Endothelial cell of umbilical vein (primary cell): ENCODE measurements at regions of chr17 and their contacts with region 1.

Region 1: DNA sequence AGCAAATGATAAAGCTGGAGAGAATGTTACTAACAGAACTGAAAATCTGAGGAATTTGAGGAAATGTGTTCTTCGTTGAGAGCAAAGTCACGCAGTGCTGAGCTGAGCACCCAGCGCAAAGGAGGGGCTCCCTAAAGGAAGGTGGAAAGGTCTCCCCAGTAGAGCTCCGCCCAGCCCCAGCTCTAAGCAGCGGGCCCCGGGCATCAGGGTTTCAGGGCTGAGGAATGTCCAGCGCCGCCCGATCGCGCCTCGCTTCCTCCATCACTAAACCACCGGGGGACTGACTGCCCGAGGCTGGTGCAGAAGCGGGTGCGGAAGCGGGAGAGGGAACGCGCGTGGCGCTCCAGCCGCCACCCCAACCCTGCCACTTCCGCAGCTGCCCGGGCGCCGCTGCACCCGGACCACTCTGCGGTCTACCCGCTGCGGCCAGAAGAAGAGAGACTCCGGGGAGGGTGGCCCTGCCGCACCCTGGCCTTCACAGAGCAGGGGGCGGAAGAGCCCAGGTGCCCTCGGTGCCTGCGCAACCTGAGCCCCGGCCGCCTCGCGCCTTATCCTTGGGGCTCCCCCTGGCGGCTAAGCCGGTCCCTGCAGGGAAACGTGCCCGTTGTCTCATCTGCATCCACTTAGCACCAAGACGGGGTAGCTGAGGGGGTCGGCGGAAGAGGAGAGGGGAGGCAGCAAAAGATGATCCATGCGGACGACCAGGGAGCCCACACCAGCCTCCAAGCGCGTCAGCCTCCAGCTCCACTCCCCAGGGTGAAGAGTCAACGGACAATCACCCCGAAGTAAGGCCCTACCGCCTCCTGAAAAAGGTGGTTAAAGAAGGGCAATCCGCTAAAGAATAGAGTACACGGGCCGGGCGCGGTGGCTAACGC is 12.4 kb upstream of the GUCY2D start:
- DNase-seq: peak; percentile 66
- H3K4me3 ChIP-seq: peak overlapping the region; percentile 45 to 53 (median 51)
- H3K27ac ChIP-seq: no peak overlapping the region
- H3K4me1 ChIP-seq: peaks cover 4% of the 10 kb centered on the region
- H3K27me3 ChIP-seq: peaks cover 3 to 12% of the 10 kb centered on the region in 2 experiments
- CTCF ChIP-seq: peak; percentile 93 to 98
- POLR2A ChIP-seq: no peak

Region 2: GRCh38 chr17:7745748-7746470 is 244.1 kb before region 1 on chr17:
- CTCF ChIA-PET with region 1: interaction called, 109 read pairs
- POLR2A ChIA-PET with region 1: no interaction called
- dilution Hi-C with region 1: no loop called
- intact Hi-C with region 1: loop called (anchors 1 kb)
- DNase-seq: peak; percentile 98
- H3K4me3 ChIP-seq: no peak overlapping the region
- H3K27ac ChIP-seq: peak overlapping the region; percentile 58
- H3K4me1 ChIP-seq: peaks cover 17% of the 10 kb centered on the region
- H3K27me3 ChIP-seq: peaks cover 0 to under 1% of the 10 kb centered on the region in 2 experiments
- CTCF ChIP-seq: peak in 1 of 2 donors; percentile 18
- POLR2A ChIP-seq: no peak

Region 3: DNA sequence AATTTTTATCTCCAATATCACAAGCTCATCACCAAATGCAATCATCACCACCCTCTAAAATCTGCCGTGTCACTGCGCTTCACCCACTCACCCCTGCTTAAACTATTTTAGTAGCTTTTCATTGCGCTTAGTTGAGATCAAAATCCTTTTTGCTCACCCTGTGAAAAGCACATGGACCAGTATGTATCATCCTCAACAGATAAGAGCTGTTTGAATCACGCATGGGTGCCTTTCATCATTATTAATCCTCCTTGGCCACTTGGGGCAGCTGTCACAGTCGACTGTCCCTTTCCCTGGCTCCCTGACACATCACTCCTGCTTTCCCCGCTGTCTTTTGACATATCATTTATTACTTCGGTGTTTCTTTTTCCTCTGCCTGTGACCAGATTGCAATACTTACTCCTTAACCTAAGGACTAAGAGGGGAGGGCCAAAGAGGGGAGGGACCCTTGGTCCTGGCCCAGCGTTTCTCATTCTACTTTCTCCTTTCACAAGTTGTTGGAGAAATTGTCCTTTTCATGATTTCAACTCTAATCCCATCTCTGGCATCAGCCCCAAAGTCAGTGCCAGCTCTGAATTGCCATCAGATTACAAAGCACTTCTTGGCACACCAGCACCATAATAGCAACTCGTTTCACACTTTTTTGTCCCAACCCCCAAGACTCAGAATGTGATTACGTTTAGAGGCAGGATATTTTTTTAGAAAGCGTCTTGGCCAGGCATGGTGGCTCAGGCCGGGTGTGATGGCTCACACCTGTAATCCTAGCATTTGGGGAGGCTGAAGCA is 164.6 kb before region 1 on chr17:
- CTCF ChIA-PET with region 1: interaction called, 121 read pairs
- POLR2A ChIA-PET with region 1: no interaction called
- dilution Hi-C with region 1: no loop called
- intact Hi-C with region 1: loop called (anchors 1 kb)
- DNase-seq: no peak
- H3K4me3 ChIP-seq: no peak overlapping the region
- H3K27ac ChIP-seq: no peak overlapping the region
- H3K4me1 ChIP-seq: no peaks in the 10 kb centered on the region
- H3K27me3 ChIP-seq: peaks cover 0 to 6% of the 10 kb centered on the region in 2 experiments
- CTCF ChIP-seq: peak in 1 of 2 donors; percentile 4
- POLR2A ChIP-seq: no peak

Region 4: DNA sequence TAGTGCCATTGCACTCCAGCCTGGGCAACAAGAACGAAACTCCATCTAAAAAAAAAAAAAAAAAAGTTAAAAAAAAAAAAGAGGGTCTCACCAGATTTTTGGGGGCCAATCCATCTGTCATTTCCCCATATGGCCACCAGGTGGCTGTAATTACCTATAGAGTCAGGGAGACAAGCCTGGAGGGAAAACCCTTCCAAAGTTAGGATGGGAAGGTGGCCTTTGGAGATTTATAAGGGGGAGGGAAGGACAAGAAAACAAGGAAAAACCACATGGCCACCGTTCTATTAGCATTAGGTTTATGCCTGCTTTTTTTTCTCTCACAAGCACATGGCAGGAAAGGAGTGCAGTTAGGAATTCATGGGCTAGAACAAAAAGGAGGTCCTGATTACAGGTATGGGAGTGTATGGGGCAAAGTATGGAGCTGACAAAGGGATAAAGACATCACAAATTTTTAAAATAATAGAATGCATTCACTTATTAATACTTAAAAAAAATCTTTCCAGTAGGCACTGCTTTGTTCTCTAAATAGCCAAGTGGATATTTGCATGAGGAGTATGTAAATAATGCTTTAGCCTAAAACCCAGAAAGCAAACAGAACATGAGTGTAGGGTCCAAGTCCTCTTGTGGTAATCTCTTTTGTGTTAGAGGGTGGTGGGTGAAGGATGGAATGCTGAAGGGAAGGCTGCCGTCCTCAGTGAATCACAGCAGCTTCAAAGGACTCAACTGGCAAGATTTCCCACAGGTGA is 127.2 kb before region 1 on chr17:
- CTCF ChIA-PET with region 1: interaction called, 38 read pairs
- POLR2A ChIA-PET with region 1: no interaction called
- dilution Hi-C with region 1: no loop called
- intact Hi-C with region 1: loop called (anchors 1 kb)
- DNase-seq: peak; percentile 57
- H3K4me3 ChIP-seq: no peak overlapping the region
- H3K27ac ChIP-seq: no peak overlapping the region
- H3K4me1 ChIP-seq: peaks cover 15% of the 10 kb centered on the region
- H3K27me3 ChIP-seq: no peaks in the 10 kb centered on the region
- CTCF ChIP-seq: peak; percentile 46 to 63
- POLR2A ChIP-seq: no peak

Region 5: GRCh38 chr17:7931709-7932482 is 58.1 kb before region 1 on chr17 and contains the starts of genes CNTROB and TRAPPC1:
- CTCF ChIA-PET with region 1: interaction called, 42 read pairs
- POLR2A ChIA-PET with region 1: no interaction called
- dilution Hi-C with region 1: no loop called
- intact Hi-C with region 1: no loop called
- DNase-seq: peak; percentile 99
- H3K4me3 ChIP-seq: peak within 1 kb of the TSS; percentile 74 to 98 (median 96)
- H3K27ac ChIP-seq: peak within 1 kb of the TSS; percentile 66
- H3K4me1 ChIP-seq: peaks cover 23% of the 10 kb centered on the region
- H3K27me3 ChIP-seq: no peaks in the 10 kb centered on the region
- CTCF ChIP-seq: no peak
- POLR2A ChIP-seq: no peak
- total RNA-seq, gene CNTROB: 45.0 and 47.2 TPM in 2 replicates
- total RNA-seq, gene TRAPPC1: 139 and 146 TPM in 2 replicates

Region 6: DNA sequence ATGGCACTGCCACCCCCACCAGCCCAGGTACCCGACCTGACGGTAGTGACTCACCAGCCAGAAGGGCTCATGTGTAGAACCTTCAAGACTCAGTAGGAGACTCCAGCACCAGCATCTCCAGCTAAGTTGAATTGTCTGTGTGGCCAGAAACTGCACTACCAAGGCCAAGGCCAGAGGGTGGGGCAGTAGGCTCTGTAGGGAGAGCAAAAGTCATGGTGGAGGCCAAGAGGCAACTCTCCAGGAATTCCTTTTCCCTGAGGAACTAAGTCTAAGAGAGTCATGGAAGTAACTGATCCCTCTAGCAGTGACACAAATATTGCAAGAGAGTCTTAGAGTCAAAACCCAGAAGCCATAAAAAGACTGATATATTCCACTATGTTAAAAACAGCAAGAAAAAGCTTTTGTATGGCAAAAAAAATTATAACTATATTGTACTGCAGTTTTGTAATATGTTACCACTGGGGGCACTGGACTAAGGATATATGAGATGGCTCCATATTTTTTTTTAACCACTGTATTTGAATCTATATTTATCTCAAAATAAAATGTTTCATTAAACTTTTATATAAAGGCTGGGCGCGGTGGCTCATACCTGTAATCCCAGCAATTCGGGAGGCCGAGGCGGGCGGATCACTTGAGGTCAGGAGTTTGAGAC is 17.8 kb before region 1 on chr17:
- CTCF ChIA-PET with region 1: interaction called, 25 read pairs
- POLR2A ChIA-PET with region 1: no interaction called
- dilution Hi-C with region 1: no loop called
- intact Hi-C with region 1: no loop called
- DNase-seq: no peak
- H3K4me3 ChIP-seq: no peak overlapping the region
- H3K27ac ChIP-seq: no peak overlapping the region
- H3K4me1 ChIP-seq: no peaks in the 10 kb centered on the region
- H3K27me3 ChIP-seq: peaks cover 0 to 2% of the 10 kb centered on the region in 2 experiments
- CTCF ChIP-seq: peak in 1 of 2 donors; percentile 6
- POLR2A ChIP-seq: no peak

Region 7: DNA sequence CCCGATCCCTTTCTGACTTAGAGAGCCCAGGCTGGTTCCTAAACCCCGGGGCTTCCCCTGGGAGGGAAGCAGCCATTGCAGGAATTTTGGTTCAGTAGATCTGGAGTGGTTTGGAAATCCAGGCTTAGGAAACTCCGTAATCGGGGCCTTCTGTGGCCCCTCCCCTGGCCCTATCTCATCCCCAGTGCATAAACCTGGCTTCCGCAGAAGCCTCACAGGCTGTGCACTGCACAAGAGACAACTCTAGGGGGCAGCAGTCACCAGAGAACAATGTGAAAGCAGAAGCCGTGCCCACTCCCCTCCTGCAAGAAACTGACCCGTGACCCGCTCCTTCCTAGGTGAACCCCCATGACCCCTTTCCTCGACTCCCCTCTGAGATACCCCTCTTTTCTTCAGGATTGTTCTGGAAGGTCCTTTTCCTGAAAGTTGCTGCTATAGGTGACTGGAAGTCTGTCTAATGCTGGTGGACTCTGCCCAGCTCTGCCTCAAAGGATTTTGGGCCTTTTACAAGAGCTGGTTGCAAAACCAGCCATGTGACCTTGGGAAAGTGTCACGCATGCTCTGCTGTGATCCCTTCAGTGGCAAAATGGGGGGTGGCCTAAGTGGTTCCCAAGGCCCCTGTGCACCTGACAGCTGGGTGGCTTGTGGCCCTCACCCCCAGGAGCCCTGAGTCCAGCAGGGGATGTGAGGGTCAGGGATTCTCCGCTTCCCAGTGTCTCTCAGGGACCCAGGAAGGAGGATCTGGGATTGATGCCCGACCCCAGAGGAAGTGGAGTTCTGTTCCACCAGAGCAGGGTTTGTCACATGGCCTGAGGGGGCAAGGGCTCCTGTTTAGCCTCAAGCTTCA is 26.8 kb after region 1 on chr17:
- CTCF ChIA-PET with region 1: interaction called, 20 read pairs
- POLR2A ChIA-PET with region 1: no interaction called
- dilution Hi-C with region 1: no loop called
- intact Hi-C with region 1: no loop called
- DNase-seq: peak; percentile 12
- H3K4me3 ChIP-seq: no peak overlapping the region
- H3K27ac ChIP-seq: no peak overlapping the region
- H3K4me1 ChIP-seq: no peaks in the 10 kb centered on the region
- H3K27me3 ChIP-seq: peaks cover 6 to 22% of the 10 kb centered on the region in 2 experiments
- CTCF ChIP-seq: peak; percentile 55 to 69
- POLR2A ChIP-seq: no peak